Activated T-helper 1 cell treated with anti-CD3 and anti-CD28 coated beads, Interleukin-12 subunit alpha, Interleukin-12 subunit beta, Interleukin-2, Interleukin-4 antibody, amounts not matched to agents 30 ng/mL and 10 ng/mL and 1 ng/mL, durations not matched to agents 14 hours and 24 hours and 36 hours (primary cell): ENCODE measurements at regions of chr17 and their contacts with region 1.

Region 1: DNA sequence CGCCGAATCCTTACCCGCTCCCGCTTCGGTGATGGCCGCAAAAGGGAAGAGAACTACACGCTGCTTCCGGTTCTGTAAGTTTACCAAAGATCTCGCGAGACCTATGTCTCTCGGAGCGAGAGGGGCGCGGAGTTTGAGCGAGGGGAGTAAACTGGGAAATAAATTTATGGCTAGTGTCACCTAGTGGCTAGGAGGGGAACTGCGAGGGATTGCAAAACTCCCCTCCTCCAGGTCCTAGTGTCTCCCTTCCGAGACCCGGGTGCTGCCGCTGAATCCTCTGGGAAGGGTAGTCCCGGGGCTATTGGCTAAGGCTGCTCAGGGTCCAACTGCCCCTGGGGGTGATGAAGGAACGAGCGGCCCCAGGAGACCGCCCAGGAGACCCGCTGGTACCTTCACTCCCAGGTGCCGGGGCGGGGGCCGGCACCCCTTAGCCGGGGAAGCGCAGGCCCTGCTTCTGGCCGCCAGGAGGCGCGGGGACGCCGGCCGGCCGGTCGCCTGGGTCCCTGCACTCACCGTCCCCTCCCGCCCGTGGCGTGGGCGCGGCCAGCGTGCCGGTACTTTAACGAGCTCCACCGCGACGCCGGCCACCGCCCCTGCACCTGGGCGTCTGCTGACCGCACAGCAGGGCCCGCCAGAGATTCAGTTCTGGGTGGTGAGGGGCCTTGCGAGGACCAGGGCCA is at the start of gene RPL26:
- DNase-seq: peak; percentile 94
- H3K4me3 Mint-ChIP-seq: peak within 1 kb of the TSS; percentile 90
- H3K27ac Mint-ChIP-seq: peak within 1 kb of the TSS; percentile 87
- H3K4me1 Mint-ChIP-seq: peaks cover 42% of the 10 kb centered on the region
- H3K27me3 Mint-ChIP-seq: no peaks in the 10 kb centered on the region
- total RNA-seq, gene RPL26: 2,163 and 2,185 TPM in 2 replicates

Region 2: DNA sequence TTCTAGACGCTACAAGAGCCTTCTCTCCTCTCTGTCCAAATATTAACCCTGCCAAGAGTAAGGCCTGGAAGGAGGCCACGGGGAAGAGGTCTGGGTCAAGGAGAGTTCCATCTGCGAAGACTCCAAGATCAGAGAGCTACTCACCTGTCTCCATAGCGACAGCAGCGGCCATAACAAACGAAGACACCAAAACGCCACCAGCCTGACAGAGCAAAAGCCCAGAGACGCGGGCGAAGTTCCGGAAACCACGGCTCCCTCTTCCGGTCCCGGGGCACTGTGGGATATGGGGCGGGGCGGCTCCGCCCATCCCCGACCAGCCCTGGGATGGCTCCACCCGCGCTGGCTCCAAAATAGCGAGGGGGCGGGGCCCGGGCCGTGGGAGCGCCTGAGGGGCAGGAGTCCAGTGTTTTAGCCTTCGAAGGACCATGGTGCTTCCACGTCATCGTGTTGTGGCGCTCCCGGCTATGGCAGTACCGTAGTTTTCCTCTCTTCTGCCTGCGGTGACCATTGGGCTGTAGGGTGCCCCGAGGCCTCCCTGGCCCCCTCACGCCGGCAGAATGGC is 1731.8 kb before region 1 on chr17 and contains the starts of genes C17orf100 and MED31:
- intact Hi-C with region 1: loop called (anchors 5 kb)
- DNase-seq: peak; percentile 95
- H3K4me3 Mint-ChIP-seq: peak within 1 kb of the TSS; percentile 100
- H3K27ac Mint-ChIP-seq: peak within 1 kb of the TSS; percentile 100
- H3K4me1 Mint-ChIP-seq: peaks cover 69% of the 10 kb centered on the region
- H3K27me3 Mint-ChIP-seq: peaks cover 17% of the 10 kb centered on the region
- total RNA-seq, gene C17orf100: 1.6 and 1.7 TPM in 2 replicates
- total RNA-seq, gene MED31: 24.3 and 28.4 TPM in 2 replicates

Region 3: DNA sequence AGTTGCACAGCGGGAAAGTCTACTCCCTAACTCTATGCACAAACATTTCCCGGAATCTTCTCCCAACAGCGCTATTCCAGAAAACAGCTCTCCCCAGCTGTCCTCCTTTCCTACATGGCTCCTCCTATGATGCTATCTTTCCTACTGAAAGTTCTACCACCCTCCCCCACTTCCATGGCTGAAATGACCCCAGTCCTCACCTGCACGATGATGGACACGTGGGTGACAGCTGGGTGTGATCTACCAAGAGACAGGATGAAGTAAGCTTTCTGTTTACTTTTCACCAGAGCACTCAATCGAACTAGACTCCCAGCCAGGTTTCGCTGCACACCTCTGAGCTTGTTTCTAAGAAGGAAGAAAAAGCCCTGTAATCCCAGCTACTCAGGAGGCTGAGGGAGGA is 146.1 kb before region 1 on chr17:
- intact Hi-C with region 1: no loop called
- DNase-seq: no peak
- H3K4me3 Mint-ChIP-seq: no peak overlapping the region
- H3K27ac Mint-ChIP-seq: no peak overlapping the region
- H3K4me1 Mint-ChIP-seq: no peaks in the 10 kb centered on the region
- H3K27me3 Mint-ChIP-seq: no peaks in the 10 kb centered on the region

Region 4: DNA sequence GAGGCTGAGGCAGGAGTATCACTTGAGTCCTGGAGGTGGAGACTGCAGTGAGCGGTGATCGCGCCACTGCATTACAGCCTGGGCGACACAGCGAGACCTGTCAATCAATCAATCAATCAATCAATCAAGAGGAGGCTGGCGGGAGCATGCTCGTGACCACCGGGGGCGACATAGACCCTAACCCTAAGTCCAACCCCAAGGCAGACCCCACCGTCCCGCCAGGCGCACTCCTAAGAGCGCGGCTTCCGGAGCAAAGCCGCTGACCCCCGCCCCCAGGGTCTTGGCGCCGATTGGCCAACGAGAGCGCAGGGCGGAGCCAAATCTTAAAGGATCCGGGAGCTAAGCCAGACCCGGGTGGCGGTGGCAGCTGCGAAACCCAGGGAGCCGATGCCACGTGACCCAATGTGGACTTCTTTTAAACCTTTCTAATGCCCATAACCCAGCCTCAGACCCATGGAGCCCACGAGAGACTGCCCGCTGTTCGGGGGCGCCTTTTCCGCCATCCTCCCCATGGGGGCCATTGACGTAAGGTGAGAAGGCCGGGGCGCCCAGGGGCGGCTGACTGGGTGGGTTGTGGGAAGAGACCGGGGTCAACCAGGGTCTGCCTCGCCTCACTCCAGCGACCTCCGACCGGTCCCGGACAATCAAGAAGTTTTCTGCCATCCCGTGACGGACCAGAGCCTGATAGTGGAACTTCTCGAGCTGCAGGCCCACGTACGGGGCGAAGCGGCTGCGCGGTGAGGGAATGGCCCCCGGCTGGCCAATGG is 94.8 kb before region 1 on chr17 and contains the start of gene RANGRF:
- intact Hi-C with region 1: loop called (anchors 1 kb)
- DNase-seq: peak; percentile 85
- H3K4me3 Mint-ChIP-seq: peak within 1 kb of the TSS; percentile 86
- H3K27ac Mint-ChIP-seq: peak within 1 kb of the TSS; percentile 92
- H3K4me1 Mint-ChIP-seq: peaks cover 37% of the 10 kb centered on the region
- H3K27me3 Mint-ChIP-seq: no peaks in the 10 kb centered on the region
- total RNA-seq, gene RANGRF: 52.9 and 57.9 TPM in 2 replicates

Region 5: DNA sequence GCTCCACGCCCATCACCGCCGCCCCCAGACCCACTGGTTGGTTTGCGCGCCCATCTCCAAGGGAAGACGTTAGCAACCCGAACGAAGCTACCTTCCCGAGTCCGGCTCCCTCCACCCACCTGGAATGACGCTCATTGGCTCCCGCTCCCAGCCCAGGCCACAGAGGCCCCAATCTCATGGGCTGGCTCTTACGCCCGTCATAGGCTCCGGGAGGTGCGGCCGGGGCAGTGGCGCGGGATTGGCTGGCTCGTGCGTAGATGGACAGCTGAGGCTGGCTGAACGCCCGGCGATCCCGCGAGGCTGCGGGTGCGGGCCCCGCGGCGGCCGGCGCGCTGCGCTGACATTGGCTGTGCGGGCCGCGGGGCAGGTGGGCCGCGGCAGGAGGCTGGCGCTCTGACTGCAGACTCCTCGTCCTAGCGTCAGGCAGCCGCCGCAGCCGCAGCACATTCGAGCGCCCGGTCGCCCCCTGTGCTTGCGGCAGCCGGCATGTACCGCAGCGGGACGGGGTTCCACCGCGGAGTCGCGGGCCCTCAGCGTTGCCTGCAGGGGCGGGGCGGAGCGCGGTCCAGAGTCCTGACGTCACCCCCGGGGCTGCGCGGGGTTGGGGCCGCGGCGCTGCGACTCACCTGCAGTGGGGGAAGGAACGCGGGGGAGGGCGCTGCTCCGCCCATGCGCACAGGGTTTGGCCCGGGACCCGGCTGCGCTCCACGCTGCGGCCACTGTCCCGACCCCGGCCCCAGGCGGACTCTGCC is 247.7 kb after region 1 on chr17:
- intact Hi-C with region 1: loop called (anchors 2 kb)
- DNase-seq: peak; percentile 88
- H3K4me3 Mint-ChIP-seq: peak overlapping the region; percentile 92
- H3K27ac Mint-ChIP-seq: no peak overlapping the region
- H3K4me1 Mint-ChIP-seq: peaks cover 18% of the 10 kb centered on the region
- H3K27me3 Mint-ChIP-seq: peaks cover 52% of the 10 kb centered on the region

Region 6: DNA sequence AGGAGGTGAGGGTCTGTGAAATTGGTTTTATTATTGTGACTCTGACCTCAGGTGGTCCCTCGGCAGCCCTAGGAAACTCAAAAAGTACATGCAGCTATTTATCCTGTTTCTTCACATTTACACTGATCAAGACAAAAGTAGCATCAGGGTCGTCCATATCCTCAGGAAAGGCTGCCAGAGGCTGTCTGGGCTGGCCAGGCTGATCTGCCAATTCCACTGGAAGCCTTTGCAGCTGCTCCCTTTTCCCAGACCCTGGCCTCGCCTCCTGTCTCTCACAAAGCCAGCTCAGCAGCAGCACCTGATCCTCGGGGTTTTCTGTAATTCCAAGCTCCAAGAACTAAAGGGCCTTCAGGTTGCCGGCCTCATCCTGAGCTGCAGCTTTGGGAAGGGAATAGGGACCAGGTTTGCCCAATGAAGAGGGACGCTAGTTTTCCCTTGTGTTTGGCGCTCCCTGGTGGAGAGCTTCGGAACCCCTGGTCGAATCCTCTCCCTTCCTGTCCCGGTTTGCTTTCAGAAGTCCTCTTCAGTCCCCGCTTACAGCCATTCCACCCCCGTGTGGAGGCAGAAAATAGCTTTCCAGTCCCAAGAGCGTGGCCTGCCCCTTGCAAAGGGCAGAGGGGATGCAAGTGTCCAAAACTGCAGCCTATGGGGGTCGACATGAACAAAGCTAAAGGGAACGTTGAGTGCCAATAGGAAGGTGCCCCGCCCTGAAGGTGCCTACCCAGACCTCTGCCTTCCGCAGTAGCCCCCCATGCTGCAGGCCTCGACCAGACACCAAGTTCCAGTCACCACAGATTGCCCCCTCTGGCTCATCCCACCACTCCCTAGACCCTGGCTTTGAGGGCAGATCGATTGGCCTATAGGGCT is 402.5 kb after region 1 on chr17:
- intact Hi-C with region 1: loop called (anchors 1 kb)
- DNase-seq: peak; percentile 19
- H3K4me3 Mint-ChIP-seq: no peak overlapping the region
- H3K27ac Mint-ChIP-seq: no peak overlapping the region
- H3K4me1 Mint-ChIP-seq: no peaks in the 10 kb centered on the region
- H3K27me3 Mint-ChIP-seq: peaks cover 9% of the 10 kb centered on the region